GM12878 (cell line): ENCODE measurements at regions of chr2 and their contacts with region 1.

Region 1: DNA sequence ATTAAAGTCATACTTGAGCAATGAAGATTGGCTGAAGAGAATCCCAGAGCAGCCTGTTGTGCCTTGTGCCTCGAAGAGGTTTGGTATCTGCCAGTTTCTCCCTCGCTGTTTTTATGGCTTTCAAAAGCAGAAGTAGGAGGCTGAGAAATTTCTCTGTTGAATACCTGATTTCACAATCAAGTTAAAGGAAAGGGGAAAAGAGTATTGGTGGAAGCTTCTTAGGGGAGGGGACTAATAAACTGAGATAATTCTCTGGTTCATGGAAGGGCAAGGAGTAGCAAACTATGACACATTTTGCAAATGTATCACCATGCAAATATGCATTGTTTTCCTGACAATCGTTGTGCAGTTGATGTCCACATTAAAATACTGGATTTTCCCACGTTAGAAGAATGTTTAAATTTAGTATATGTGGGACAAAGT is at the start of gene IL1B:
- DNase-seq: no peak
- ATAC-seq: peak; percentile 21
- H3K4me3 ChIP-seq: no peak within 1 kb of the TSS
- H3K27ac ChIP-seq: no peak within 1 kb of the TSS
- H3K4me1 ChIP-seq: peaks cover 34% of the 10 kb centered on the region
- H3K27me3 ChIP-seq: no peaks in the 10 kb centered on the region
- CTCF ChIP-seq: no peak
- EP300 ChIP-seq: no peak
- POLR2A ChIP-seq: no peak
- RAD21 ChIP-seq: no peak
- polyA plus RNA-seq, gene IL1B: 0.57 to 1.6 TPM

Region 2: GRCh38 chr2:112821142-112821541 is 15.6 kb before region 1 on chr2:
- CTCF ChIA-PET with region 1: interaction called, 5 read pairs
- POLR2A ChIA-PET with region 1: interaction called, 5 read pairs
- RAD21 ChIA-PET with region 1: interaction called, 6 read pairs
- SMC1A ChIA-PET with region 1: interaction called, 21 read pairs
- in situ Hi-C with region 1: no loop called
- intact Hi-C with region 1: no loop called
- DNase-seq: no peak
- ATAC-seq: peak; percentile 94
- H3K4me3 ChIP-seq: no peak overlapping the region
- H3K27ac ChIP-seq: no peak overlapping the region
- H3K4me1 ChIP-seq: peaks cover 15% of the 10 kb centered on the region
- H3K27me3 ChIP-seq: no peaks in the 10 kb centered on the region
- CTCF ChIP-seq: no peak
- EP300 ChIP-seq: no peak; a peak in 3 of 4 replicates
- POLR2A ChIP-seq: no peak
- RAD21 ChIP-seq: no peak